Activated T-helper 1 cell treated with anti-CD3 and anti-CD28 coated beads, Interleukin-12 subunit alpha, Interleukin-12 subunit beta, Interleukin-2, Interleukin-4 antibody, amounts not matched to agents 30 ng/mL and 10 ng/mL and 1 ng/mL, durations not matched to agents 14 hours and 24 hours and 36 hours (primary cell): ENCODE measurements at regions of chr11 and their contacts with region 1.

Region 1: DNA sequence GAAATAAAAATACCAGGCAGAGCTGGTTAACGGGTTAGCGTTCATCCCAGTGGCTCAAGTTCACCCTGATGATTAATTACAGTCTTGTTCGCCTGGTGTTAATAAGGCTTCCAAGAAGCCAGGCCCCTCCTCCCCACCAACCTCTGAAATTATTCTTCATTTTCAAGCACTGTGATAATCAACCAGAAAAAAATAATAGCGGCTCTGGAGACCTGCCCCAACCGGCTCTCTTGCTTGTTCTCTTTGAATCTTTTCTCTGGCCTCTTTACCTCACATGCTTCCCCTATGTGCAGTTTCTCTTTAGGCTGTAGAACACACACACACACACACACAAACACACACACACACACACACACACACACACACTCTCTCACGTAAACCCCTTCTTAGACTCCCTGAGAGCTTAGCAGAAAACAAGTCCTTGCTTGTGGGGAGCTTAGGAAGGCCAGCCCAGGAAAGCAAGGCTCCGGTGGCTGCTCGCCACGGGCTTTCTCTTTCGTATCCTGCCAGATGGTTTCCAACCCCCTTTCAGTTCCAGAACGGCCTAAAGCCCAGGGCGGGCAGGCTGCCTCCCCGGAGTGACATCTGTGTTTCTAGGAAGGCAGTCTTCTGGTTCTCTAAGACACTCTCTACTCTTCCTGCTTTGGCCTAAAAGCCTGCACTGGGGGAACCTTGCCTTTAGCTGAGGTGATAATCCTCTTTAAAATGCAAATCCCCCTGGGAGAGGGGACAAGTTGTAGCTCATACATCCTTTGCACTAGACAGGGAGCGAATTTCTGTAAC is 106.4 kb upstream of the SESN3 start:
- DNase-seq: peak; percentile 41
- H3K4me3 Mint-ChIP-seq: no peak overlapping the region
- H3K27ac Mint-ChIP-seq: no peak overlapping the region
- H3K4me1 Mint-ChIP-seq: no peaks in the 10 kb centered on the region
- H3K27me3 Mint-ChIP-seq: peaks cover 8% of the 10 kb centered on the region

Region 2: DNA sequence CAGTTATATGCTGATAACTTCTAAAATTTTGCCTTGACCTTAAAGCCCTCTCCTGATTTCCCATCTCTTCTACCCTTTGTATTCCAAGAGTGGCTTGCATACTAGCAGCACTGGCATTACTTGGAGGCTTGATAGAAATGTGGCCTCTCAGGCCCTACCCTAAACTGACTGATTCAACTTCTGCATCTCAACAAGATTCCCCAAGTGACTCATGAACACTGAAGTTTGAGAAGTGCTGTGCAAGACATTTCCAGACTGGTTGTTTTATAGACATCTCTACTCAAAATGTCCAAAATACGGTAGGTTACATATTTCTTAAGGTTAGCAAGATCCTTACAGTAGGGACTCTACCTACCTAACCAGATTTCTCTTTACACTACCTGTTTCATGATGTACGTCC is 155.0 kb before region 1 on chr11:
- intact Hi-C with region 1: no loop called
- DNase-seq: no peak
- H3K4me3 Mint-ChIP-seq: no peak overlapping the region
- H3K27ac Mint-ChIP-seq: no peak overlapping the region
- H3K4me1 Mint-ChIP-seq: peaks cover 7% of the 10 kb centered on the region
- H3K27me3 Mint-ChIP-seq: no peaks in the 10 kb centered on the region

Region 3: DNA sequence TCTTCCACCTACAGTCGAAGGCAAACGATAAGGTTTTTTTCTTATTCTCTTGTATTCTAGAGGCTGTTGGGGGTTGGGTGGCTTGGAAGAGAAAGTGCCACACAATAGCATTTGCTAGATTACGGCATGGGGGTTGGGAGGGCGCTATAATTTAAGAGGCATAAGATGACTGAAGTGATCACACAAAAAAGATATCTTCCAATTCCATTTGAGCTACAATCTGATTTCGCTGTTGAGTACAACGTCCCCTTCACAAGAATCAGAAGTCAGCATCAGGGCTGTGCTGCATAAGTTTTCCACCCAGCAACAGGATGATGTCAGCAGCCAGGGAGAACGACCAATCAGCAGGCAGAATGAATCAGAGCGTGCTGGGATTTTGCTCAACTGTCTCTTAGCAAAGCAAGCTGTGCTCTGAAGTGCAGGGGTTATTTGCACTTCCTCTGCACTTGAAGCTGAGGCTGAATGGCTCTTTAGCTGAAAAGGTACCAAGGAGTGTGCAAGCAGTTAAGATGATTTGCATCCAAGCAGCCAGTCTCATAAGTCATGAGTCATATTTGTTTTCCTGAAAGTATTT is 83.1 kb before region 1 on chr11:
- intact Hi-C with region 1: loop called (anchors 2 kb)
- DNase-seq: peak; percentile 78
- H3K4me3 Mint-ChIP-seq: peak overlapping the region; percentile 81
- H3K27ac Mint-ChIP-seq: peak overlapping the region; percentile 80
- H3K4me1 Mint-ChIP-seq: peaks cover 43% of the 10 kb centered on the region
- H3K27me3 Mint-ChIP-seq: peaks cover 1% of the 10 kb centered on the region